CD8-positive, alpha-beta T cell (primary cell): ENCODE measurements at regions of chr15 and their contacts with region 1.

Region 1: DNA sequence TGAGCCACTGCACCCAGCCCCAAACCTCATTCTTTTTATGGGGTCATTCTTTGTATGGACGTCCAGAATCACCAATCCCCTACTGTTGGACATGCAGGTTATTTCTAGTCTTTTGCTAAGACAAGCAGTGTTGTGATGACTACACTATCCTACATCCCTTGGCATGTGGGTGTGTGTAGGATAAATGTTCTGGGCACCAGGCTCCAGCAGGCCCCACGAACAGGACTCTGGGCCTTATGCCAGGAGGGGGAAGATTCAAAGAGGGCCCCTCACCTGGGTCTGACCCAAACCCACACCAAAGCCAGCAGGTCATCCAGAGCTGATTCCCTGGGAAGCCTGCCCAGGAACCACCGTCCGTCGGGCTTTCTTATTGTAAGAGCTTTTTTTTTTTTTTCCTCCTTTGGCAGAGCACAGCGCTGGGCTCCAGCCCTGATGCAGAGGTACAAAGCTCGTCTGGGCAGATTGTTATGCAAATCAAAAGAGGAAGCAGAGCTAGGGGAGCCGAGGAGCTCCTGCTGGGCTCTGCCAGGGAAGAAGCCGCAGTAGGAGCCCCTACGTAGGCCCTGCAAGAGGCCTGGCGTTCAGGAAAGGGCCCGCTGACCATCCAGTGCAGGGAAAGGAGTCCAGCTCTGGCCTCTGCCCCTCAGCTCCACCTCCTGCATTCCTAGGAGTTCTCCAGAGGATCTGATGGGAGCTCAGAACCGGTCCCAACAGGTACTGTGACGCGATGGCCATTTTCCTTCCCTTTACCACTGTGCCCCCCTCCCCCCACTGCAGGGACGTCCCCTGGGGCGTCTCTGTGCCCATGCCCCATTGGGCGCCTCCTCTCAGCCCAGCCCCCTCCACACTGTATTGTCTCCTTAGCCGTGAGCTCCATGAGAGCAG is 29.0 kb upstream of the FURIN start:
- DNase-seq: peak in 1 of 9 experiments; percentile 44
- ATAC-seq: no peak
- H3K4me3 ChIP-seq: peak overlapping the region in 1 of 2 experiments; percentile 14
- H3K4me3 Mint-ChIP-seq: peak overlapping the region; percentile 43
- H3K27ac ChIP-seq: no peak overlapping the region
- H3K27ac Mint-ChIP-seq: peak overlapping the region; percentile 77
- H3K4me1 ChIP-seq: peaks cover 39% of the 10 kb centered on the region
- H3K4me1 Mint-ChIP-seq: peaks cover 30% of the 10 kb centered on the region
- H3K27me3 ChIP-seq: no peaks in the 10 kb centered on the region
- H3K27me3 Mint-ChIP-seq: no peaks in the 10 kb centered on the region
- CTCF ChIP-seq: no peak

Region 2: GRCh38 chr15:90550919-90551318 is 288.5 kb before region 1 on chr15:
- CTCF ChIA-PET with region 1: no interaction called
- POLR2A ChIA-PET with region 1: no interaction called
- intact Hi-C with region 1: no loop called
- DNase-seq: no peak
- ATAC-seq: no peak
- H3K4me3 ChIP-seq: no peak overlapping the region
- H3K4me3 Mint-ChIP-seq: no peak overlapping the region
- H3K27ac ChIP-seq: no peak overlapping the region
- H3K27ac Mint-ChIP-seq: no peak overlapping the region
- H3K4me1 ChIP-seq: peaks cover 18% of the 10 kb centered on the region
- H3K4me1 Mint-ChIP-seq: peaks cover 59% of the 10 kb centered on the region
- H3K27me3 ChIP-seq: no peaks in the 10 kb centered on the region
- H3K27me3 Mint-ChIP-seq: no peaks in the 10 kb centered on the region
- CTCF ChIP-seq: no peak

Region 3: DNA sequence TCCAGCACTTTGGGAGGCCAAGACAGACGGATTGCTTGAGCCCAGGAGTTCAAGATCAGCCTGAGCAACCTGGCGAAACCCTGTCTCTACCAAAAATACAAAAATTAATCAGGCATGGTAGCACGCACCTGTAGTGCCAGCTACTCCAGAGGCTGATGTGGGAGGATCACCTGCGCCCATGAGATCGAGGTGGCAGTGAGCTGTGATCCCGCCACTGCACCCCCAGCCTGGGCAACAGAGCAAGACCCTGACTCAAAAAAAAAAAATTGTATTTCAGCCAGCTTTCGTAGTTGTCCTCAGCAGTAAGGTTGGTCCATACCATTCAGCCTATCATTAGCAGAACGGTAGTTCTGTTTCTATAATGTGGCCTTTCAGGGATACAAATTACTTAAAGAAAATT is 37.6 kb before region 1 on chr15:
- CTCF ChIA-PET with region 1: no interaction called
- POLR2A ChIA-PET with region 1: no interaction called
- intact Hi-C with region 1: no loop called
- DNase-seq: no peak
- ATAC-seq: no peak
- H3K4me3 ChIP-seq: no peak overlapping the region
- H3K4me3 Mint-ChIP-seq: no peak overlapping the region
- H3K27ac ChIP-seq: no peak overlapping the region
- H3K27ac Mint-ChIP-seq: no peak overlapping the region
- H3K4me1 ChIP-seq: no peaks in the 10 kb centered on the region
- H3K4me1 Mint-ChIP-seq: no peaks in the 10 kb centered on the region
- H3K27me3 ChIP-seq: no peaks in the 10 kb centered on the region
- H3K27me3 Mint-ChIP-seq: no peaks in the 10 kb centered on the region
- CTCF ChIP-seq: no peak

Region 4: GRCh38 chr15:90851940-90852339 is 12.5 kb after region 1 on chr15:
- CTCF ChIA-PET with region 1: interaction called, 4 read pairs
- POLR2A ChIA-PET with region 1: no interaction called
- intact Hi-C with region 1: loop called in 1 of 2 experiments (anchors 2 kb)
- DNase-seq: peak in 3 of 9 experiments; percentile 36 to 48 (median 38)
- ATAC-seq: no peak
- H3K4me3 ChIP-seq: no peak overlapping the region
- H3K4me3 Mint-ChIP-seq: peak overlapping the region; percentile 46
- H3K27ac ChIP-seq: no peak overlapping the region
- H3K27ac Mint-ChIP-seq: peak overlapping the region; percentile 84
- H3K4me1 ChIP-seq: peaks cover 46% of the 10 kb centered on the region
- H3K4me1 Mint-ChIP-seq: peaks cover 52% of the 10 kb centered on the region
- H3K27me3 ChIP-seq: no peaks in the 10 kb centered on the region
- H3K27me3 Mint-ChIP-seq: no peaks in the 10 kb centered on the region
- CTCF ChIP-seq: no peak

Region 5: GRCh38 chr15:91099616-91099994 is 260.2 kb after region 1 on chr15:
- CTCF ChIA-PET with region 1: no interaction called
- POLR2A ChIA-PET with region 1: no interaction called
- intact Hi-C with region 1: no loop called
- DNase-seq: peak in 3 of 9 experiments; percentile 6 to 34 (median 23)
- ATAC-seq: peak; percentile 51
- H3K4me3 ChIP-seq: peak overlapping the region; percentile 12 to 56
- H3K4me3 Mint-ChIP-seq: peak overlapping the region; percentile 80
- H3K27ac ChIP-seq: no peak overlapping the region
- H3K27ac Mint-ChIP-seq: no peak overlapping the region
- H3K4me1 ChIP-seq: peaks cover 16% of the 10 kb centered on the region
- H3K4me1 Mint-ChIP-seq: peaks cover 20% of the 10 kb centered on the region
- H3K27me3 ChIP-seq: peaks cover 12% of the 10 kb centered on the region in 2 experiments
- H3K27me3 Mint-ChIP-seq: peaks cover 72% of the 10 kb centered on the region
- CTCF ChIP-seq: no peak